Natural killer cell (primary cell): ENCODE measurements at regions of chr18 and their contacts with region 1.

Region 1: DNA sequence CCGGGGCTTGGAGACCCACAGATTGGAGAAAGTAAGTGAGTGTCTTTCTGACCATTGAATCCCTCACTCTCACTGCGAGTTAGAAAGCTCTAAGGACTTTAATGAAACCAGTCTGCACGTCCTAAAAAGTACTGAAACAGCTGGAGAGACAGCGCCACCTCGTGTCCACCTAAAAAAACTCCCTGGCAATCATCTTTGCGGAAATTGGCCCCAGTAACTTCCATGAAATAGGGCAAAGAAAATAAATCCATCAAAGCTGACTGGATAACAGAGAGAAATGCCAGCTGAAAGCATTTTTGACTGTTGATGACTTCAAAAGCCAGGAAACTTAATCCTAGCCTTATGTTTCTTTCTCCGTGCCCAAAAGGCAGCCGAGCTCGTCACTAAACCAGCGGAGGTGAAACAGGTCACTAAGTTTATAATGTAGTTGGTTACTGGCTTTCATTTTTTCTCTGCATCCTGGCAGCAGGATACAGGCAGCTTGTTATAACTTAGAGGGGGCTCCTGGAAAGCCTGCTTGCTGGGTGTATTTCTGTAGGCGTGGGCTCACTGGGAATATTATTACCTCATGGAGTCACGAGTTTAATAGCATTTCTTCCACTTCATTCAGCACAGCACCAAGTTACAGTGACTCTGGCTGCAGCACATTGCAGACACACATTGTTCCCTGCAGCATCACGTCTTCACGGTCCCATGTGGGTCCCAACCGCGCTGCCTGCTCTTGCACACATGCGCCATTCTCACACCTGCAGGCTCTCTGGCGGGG is 266.5 kb downstream of the HRH4 start:
- DNase-seq: peak; percentile 27 to 79
- ATAC-seq: peak in 1 of 3 donors; percentile 45
- H3K4me3 ChIP-seq: no peak overlapping the region
- H3K4me3 Mint-ChIP-seq: no peak overlapping the region
- H3K27ac ChIP-seq: no peak overlapping the region
- H3K27ac Mint-ChIP-seq: no peak overlapping the region
- H3K4me1 ChIP-seq: no peaks in the 10 kb centered on the region
- H3K4me1 Mint-ChIP-seq: peaks cover 0 to 4% of the 10 kb centered on the region in 2 donors
- H3K27me3 ChIP-seq: no peaks in the 10 kb centered on the region
- H3K27me3 Mint-ChIP-seq: peaks cover 11% of the 10 kb centered on the region in 2 donors
- CTCF ChIP-seq: peak; percentile 74

Region 2: GRCh38 chr18:24362758-24363157 is 364.2 kb before region 1 on chr18:
- intact Hi-C with region 1: loop called (anchors 5 kb)
- DNase-seq: no peak
- ATAC-seq: no peak
- H3K4me3 ChIP-seq: no peak overlapping the region
- H3K4me3 Mint-ChIP-seq: no peak overlapping the region
- H3K27ac ChIP-seq: no peak overlapping the region
- H3K27ac Mint-ChIP-seq: no peak overlapping the region
- H3K4me1 ChIP-seq: no peaks in the 10 kb centered on the region
- H3K4me1 Mint-ChIP-seq: no peaks in the 10 kb centered on the region
- H3K27me3 ChIP-seq: no peaks in the 10 kb centered on the region
- H3K27me3 Mint-ChIP-seq: peaks cover 0 to 5% of the 10 kb centered on the region in 2 donors
- CTCF ChIP-seq: no peak

Region 3: DNA sequence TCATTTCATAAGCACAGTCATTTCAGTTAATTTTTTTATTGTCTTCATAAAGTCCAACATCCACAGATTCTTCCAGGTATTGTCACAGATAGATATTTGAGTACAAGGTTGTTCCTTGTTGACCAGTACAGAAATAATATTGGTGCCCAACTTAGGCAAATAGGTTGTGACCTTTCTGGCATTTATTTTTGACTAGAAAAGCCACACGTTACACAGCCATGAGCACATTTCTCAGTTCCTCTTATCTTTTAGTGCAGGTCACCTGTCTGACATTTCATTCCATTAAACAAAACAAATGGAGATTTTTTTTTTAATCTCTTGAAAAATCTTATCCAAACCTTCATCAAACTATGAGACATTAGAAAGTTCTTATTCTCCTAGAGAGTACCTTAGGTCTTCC is 196.2 kb after region 1 on chr18:
- intact Hi-C with region 1: no loop called
- DNase-seq: no peak
- ATAC-seq: no peak
- H3K4me3 ChIP-seq: no peak overlapping the region
- H3K4me3 Mint-ChIP-seq: no peak overlapping the region
- H3K27ac ChIP-seq: no peak overlapping the region
- H3K27ac Mint-ChIP-seq: no peak overlapping the region
- H3K4me1 ChIP-seq: peaks cover under 1% of the 10 kb centered on the region
- H3K4me1 Mint-ChIP-seq: no peaks in the 10 kb centered on the region
- H3K27me3 ChIP-seq: no peaks in the 10 kb centered on the region
- H3K27me3 Mint-ChIP-seq: no peaks in the 10 kb centered on the region
- CTCF ChIP-seq: no peak